ENCODE measurements at regions of chr3 and their contacts with region 1.

Region 1: DNA sequence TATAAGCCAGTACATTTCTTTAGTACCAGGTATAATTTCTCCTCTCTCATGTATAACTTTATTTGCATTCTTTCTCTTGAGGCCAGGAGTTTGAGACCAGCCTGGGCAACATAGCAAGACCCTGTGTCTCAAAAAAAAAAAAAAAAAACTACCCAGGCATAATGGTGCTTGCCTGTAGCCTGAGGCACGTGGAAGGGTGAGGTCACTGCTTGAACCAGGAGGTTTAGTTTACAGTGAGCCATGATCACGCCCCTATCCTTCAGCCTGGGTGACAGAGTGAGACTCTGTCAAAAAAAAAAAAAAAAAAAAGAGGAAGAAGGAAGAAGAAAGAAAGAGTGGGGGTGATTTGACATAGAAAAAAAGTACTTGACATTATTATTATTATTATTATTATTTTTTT is 772.6 kb downstream of the EDEM1 start:
- DNase-seq: no peak
- H3K4me3 ChIP-seq: no peak overlapping the region
- H3K27ac ChIP-seq: no peak overlapping the region
- H3K4me1 ChIP-seq: no peaks in the 10 kb centered on the region
- H3K27me3 ChIP-seq: no peaks in the 10 kb centered on the region
- CTCF ChIP-seq: no peak
- POLR2A ChIP-seq: no peak

Region 2: DNA sequence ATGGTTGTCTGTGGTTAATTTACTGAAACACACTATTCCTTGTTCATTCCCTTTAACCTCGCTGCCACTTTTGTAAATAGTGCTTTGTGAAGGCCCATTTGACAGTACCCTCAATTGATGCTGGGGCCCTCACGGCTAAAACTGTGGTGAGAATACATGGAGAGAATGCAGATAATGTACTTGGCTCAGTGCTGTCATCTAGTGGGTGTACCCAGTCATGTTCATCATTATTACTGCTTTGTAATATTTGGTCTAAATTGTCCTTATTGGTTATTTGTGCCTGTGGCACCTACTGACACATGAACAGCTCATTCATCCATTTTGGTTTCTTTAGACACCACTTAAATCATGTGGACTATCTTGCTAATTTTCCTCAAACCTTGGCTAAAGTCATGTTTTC is 229.0 kb before region 1 on chr3:
- intact Hi-C with region 1: no loop called
- DNase-seq: no peak
- H3K4me3 ChIP-seq: no peak overlapping the region
- H3K27ac ChIP-seq: no peak overlapping the region
- H3K4me1 ChIP-seq: no peaks in the 10 kb centered on the region
- H3K27me3 ChIP-seq: no peaks in the 10 kb centered on the region
- CTCF ChIP-seq: no peak
- POLR2A ChIP-seq: no peak

Region 3: GRCh38 chr3:5972586-5972985 is 12.5 kb after region 1 on chr3:
- intact Hi-C with region 1: loop called (anchors 1 kb)
- DNase-seq: no peak
- H3K4me3 ChIP-seq: no peak overlapping the region
- H3K27ac ChIP-seq: no peak overlapping the region
- H3K4me1 ChIP-seq: no peaks in the 10 kb centered on the region
- H3K27me3 ChIP-seq: no peaks in the 10 kb centered on the region
- CTCF ChIP-seq: no peak
- POLR2A ChIP-seq: no peak

Measured in breast epithelium (tissue), 4 donors.